ENCODE measurements at regions of chr11 and their contacts with region 1.

Region 1: DNA sequence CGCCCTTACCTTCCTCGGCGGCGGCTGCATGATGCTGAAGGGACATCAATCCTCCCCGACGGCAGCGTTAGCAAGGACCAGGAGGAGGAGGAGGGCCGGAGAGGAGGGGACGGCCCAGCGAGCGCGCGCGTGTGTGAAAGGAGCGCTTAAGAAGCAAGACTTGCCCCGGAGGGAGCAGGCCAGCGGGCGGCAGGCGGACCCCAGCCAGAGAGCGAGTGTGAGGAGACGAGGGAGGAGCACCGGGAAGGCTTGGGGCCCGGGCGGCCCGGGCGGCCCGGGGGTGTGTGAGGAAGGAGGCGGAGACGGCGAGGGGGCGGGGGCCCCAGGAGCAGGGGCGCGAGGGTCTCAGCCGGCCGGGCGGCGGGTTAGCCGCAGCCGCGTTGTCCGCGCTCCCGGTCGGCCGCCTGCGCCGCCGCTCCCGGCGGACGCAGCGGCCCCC is 251 bp downstream of the FCHSD2 start:
- DNase-seq: peak in 4 of 9 donors; percentile 38 to 64 (median 50)
- ATAC-seq: peak; percentile 42
- H3K4me3 ChIP-seq: peak overlapping the region; percentile 87
- H3K4me3 Mint-ChIP-seq: peak overlapping the region; percentile 83 to 97 (median 94)
- H3K27ac ChIP-seq: peak overlapping the region; percentile 99
- H3K27ac Mint-ChIP-seq: peak overlapping the region; percentile 82 to 98 (median 91)
- H3K4me1 ChIP-seq: peaks cover 25 to 26% of the 10 kb centered on the region in 2 donors
- H3K4me1 Mint-ChIP-seq: peaks cover 22 to 58% (median 51%) of the 10 kb centered on the region in 7 donors
- H3K27me3 ChIP-seq: no peaks in the 10 kb centered on the region
- H3K27me3 Mint-ChIP-seq: no peaks in the 10 kb centered on the region

Region 2: GRCh38 chr11:71787098-71787823 is 1354.6 kb before region 1 on chr11:
- CTCF ChIA-PET with region 1: interaction called, 4 read pairs
- POLR2A ChIA-PET with region 1: no interaction called
- intact Hi-C with region 1: loop called in 1 of 2 experiments (anchors 5 kb)
- DNase-seq: peak; percentile 86 to 96 (median 94)
- ATAC-seq: peak; percentile 98
- H3K4me3 ChIP-seq: peak overlapping the region; percentile 86
- H3K4me3 Mint-ChIP-seq: peak overlapping the region; percentile 95 to 100 (median 98)
- H3K27ac ChIP-seq: peak overlapping the region; percentile 93
- H3K27ac Mint-ChIP-seq: peak overlapping the region; percentile 88 to 99 (median 98)
- H3K4me1 ChIP-seq: no peaks in the 10 kb centered on the region
- H3K4me1 Mint-ChIP-seq: peaks cover 0 to 20% (median 12%) of the 10 kb centered on the region in 7 donors
- H3K27me3 ChIP-seq: no peaks in the 10 kb centered on the region
- H3K27me3 Mint-ChIP-seq: peaks cover 0 to 5% (median 0%) of the 10 kb centered on the region in 5 donors

Region 3: DNA sequence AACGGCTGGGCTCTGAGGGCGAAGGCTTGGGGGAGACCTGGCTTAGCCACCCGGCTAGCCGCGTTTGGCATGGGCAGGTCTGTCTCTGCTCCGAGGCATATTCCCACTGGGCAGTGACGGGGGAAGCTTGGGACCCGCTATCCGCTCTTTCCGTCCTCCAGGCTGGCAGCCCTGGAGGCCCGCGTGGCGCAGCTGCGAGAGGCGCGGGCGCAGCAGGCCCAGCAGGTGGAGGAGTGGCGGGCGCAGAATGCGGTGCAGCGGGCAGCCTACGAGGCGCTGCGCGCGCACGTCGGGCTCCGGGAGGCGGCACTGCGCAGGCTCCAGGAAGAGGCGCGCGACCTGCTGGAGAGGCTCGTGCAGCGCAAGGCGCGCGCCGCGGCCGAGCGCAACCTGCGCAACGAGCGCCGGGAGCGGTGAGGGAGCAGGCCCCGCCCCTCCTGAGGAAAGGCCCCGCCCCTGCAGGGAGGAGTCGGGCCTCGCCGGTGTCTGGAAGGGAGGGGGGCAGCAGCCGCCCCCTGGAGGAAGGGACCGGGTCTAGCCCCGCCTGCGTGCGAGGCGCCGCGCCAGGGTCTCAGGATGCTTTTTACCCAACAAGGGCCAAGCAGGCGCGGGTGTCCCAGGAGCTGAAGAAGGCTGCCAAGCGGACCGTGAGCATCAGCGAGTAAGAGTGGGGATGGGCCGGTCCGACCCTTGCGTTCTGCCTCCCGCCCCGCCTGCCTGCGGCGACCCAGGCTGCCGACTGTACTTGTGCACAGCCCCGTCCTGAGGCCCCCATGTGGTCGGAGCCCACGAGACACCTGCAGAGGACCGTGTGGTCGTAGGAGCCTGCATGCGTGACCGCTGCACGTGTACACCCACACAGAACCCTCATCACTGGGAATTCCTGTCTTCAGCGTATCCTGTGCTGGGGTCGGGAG is 319.7 kb before region 1 on chr11:
- CTCF ChIA-PET with region 1: no interaction called
- POLR2A ChIA-PET with region 1: interaction called, 3 read pairs
- intact Hi-C with region 1: loop called in 1 of 2 experiments (anchors 1 kb)
- DNase-seq: peak; percentile 68 to 93 (median 82)
- ATAC-seq: peak; percentile 96
- H3K4me3 ChIP-seq: peak overlapping the region; percentile 33
- H3K4me3 Mint-ChIP-seq: peak overlapping the region in 4 of 10 donors; percentile 34 to 65 (median 48)
- H3K27ac ChIP-seq: peak overlapping the region; percentile 66
- H3K27ac Mint-ChIP-seq: peak overlapping the region in 6 of 9 donors; percentile 23 to 86 (median 68)
- H3K4me1 ChIP-seq: peaks cover 0 to 3% of the 10 kb centered on the region in 2 donors
- H3K4me1 Mint-ChIP-seq: peaks cover 13 to 30% (median 25%) of the 10 kb centered on the region in 7 donors
- H3K27me3 ChIP-seq: no peaks in the 10 kb centered on the region
- H3K27me3 Mint-ChIP-seq: no peaks in the 10 kb centered on the region

Region 4: DNA sequence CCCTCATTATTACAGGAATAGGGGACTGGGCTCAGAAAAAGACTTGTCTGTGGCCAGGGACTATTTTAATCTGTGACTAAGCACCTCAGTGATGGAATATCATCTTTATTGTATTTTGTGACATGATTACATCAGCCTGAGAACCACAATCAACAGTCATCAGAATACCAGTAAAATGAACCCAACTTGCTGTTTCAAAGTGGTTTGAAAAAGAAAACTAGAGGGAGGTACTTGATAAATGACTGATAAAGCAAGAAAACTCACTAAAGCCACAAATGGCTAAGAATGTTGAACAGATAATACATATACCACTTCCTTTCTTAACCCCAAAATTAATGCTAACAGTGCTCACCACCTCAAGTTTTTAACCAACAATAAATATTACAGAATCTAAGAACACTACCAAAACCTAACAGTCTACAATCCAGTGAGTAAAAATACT is 172.0 kb before region 1 on chr11:
- CTCF ChIA-PET with region 1: no interaction called
- POLR2A ChIA-PET with region 1: interaction called, 3 read pairs
- intact Hi-C with region 1: loop called in 1 of 2 experiments (anchors 5 kb)
- DNase-seq: no peak
- ATAC-seq: peak; percentile 77
- H3K4me3 ChIP-seq: no peak overlapping the region
- H3K4me3 Mint-ChIP-seq: peak overlapping the region in 1 of 10 donors; percentile 42
- H3K27ac ChIP-seq: no peak overlapping the region
- H3K27ac Mint-ChIP-seq: peak overlapping the region in 1 of 9 donors; percentile 47
- H3K4me1 ChIP-seq: peaks cover 0 to 15% of the 10 kb centered on the region in 2 donors
- H3K4me1 Mint-ChIP-seq: peaks cover 6 to 51% (median 22%) of the 10 kb centered on the region in 7 donors
- H3K27me3 ChIP-seq: no peaks in the 10 kb centered on the region
- H3K27me3 Mint-ChIP-seq: no peaks in the 10 kb centered on the region

Region 5: GRCh38 chr11:73157053-73158010 is 15.5 kb after region 1 on chr11:
- CTCF ChIA-PET with region 1: interaction called, 12 read pairs
- POLR2A ChIA-PET with region 1: interaction called, 28 read pairs
- intact Hi-C with region 1: loop called (anchors 1 kb)
- DNase-seq: no peak
- ATAC-seq: peak; percentile 45
- H3K4me3 ChIP-seq: no peak overlapping the region
- H3K4me3 Mint-ChIP-seq: peak overlapping the region in 1 of 10 donors; percentile 38
- H3K27ac ChIP-seq: no peak overlapping the region
- H3K27ac Mint-ChIP-seq: peak overlapping the region in 3 of 9 donors; percentile 55 to 75 (median 67)
- H3K4me1 ChIP-seq: peaks cover 40 to 50% of the 10 kb centered on the region in 2 donors
- H3K4me1 Mint-ChIP-seq: peaks cover 43 to 56% (median 48%) of the 10 kb centered on the region in 7 donors
- H3K27me3 ChIP-seq: no peaks in the 10 kb centered on the region
- H3K27me3 Mint-ChIP-seq: no peaks in the 10 kb centered on the region

Region 6: DNA sequence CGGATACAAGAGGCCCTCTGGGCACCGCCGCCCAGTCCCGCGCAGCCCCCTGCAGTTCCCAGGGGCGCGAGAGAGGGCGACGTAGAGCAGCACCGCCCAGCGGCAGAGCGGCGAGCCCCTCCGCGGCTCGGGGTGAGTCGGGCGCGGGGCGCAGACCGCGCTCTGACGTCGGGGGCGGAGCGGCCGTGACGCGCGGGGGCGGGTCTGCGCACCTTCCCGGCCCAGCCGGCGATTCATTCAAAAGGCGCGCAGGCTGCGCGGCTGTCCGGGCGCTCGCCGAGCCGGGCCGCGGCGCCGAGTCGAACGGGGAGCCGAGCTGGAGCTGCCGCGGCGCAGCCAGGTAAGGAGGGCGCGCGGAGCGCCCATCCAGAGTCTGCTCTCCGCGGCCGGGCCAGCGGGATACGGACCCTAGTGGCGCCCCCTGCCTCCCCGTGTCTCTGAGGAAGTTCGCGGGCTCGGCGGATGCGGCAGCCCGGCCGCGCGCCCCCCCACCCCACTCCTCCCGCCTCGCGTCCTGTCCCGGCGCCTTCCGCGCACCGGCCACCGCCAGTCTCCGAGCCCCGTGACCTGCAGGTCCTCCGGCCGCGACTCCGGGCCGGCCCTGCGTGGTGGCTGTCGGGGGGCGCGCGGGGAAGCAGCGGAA is 234.4 kb after region 1 on chr11 and contains the start of gene RELT:
- CTCF ChIA-PET with region 1: no interaction called
- POLR2A ChIA-PET with region 1: no interaction called
- intact Hi-C with region 1: loop called in 1 of 2 experiments (anchors 1 kb)
- DNase-seq: peak; percentile 84 to 99 (median 96)
- ATAC-seq: peak; percentile 93
- H3K4me3 ChIP-seq: peak within 1 kb of the TSS; percentile 84
- H3K4me3 Mint-ChIP-seq: peak within 1 kb of the TSS; percentile 86 to 99 (median 92)
- H3K27ac ChIP-seq: peak within 1 kb of the TSS; percentile 92
- H3K27ac Mint-ChIP-seq: peak within 1 kb of the TSS; percentile 87 to 99 (median 95)
- H3K4me1 ChIP-seq: peaks cover 12 to 22% of the 10 kb centered on the region in 2 donors
- H3K4me1 Mint-ChIP-seq: peaks cover 32 to 49% (median 41%) of the 10 kb centered on the region in 7 donors
- H3K27me3 ChIP-seq: no peaks in the 10 kb centered on the region
- H3K27me3 Mint-ChIP-seq: no peaks in the 10 kb centered on the region
- total RNA-seq, gene RELT: 11.9 to 275 (median 28.4) TPM

Region 7: DNA sequence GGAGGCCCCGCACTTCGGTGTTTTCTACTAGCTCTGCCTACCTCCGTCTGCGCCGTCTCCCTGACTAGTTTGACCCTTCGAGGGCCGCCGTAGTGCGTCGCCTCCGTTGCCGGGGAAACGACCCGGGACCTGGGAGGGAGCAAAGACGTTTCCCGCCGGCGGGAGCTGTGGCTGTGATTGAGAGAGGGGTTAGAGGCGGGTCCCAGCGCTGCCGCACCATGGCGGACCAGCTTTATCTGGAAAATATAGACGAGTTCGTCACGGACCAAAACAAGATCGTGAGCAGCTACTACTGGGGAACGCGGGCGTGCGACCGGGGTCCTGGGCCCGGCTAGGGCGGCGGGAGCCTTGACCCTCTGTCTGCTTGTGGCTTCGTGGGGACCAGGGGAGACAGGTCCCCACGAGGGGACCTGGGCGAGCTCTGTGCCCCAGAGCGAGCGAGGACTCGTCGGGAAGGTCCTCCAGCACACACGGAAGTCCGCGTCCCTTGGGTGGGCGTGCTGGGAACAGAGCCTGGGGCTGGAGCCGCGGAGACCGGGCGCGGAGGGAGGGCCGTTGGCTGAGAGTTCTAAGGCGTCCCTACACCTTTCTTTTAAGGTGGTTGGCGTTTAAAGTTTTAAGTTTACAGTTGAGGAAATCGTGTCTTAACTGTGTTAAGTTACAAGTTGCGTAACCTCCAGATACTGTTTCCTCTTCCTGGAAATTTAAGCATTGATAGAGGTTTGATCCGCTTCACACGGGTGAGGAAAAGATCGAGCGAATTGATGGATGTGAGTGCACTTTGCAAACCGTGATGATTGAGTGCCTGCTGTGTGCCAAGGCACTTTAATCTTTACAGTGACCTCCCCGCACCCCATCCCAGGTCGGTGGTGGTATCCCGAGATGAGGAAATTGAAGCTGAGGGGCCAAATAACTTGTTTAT is 1450.8 kb after region 1 on chr11 and contains the start of gene POLD3:
- CTCF ChIA-PET with region 1: no interaction called
- POLR2A ChIA-PET with region 1: no interaction called
- intact Hi-C with region 1: loop called in 1 of 2 experiments (anchors 5 kb)
- DNase-seq: peak; percentile 83 to 97 (median 94)
- ATAC-seq: peak; percentile 99
- H3K4me3 ChIP-seq: peak within 1 kb of the TSS; percentile 98
- H3K4me3 Mint-ChIP-seq: peak within 1 kb of the TSS; percentile 90 to 100 (median 92)
- H3K27ac ChIP-seq: peak within 1 kb of the TSS; percentile 96
- H3K27ac Mint-ChIP-seq: peak within 1 kb of the TSS; percentile 90 to 99 (median 95)
- H3K4me1 ChIP-seq: peaks cover 9% of the 10 kb centered on the region in 2 donors
- H3K4me1 Mint-ChIP-seq: peaks cover 7 to 33% (median 27%) of the 10 kb centered on the region in 7 donors
- H3K27me3 ChIP-seq: no peaks in the 10 kb centered on the region
- H3K27me3 Mint-ChIP-seq: peaks cover 0 to 5% (median 0%) of the 10 kb centered on the region in 5 donors
- total RNA-seq, gene POLD3: 8.0 to 40.8 (median 14.7) TPM

Region 8: GRCh38 chr11:74992852-74993251 is 1851.0 kb after region 1 on chr11:
- CTCF ChIA-PET with region 1: no interaction called
- POLR2A ChIA-PET with region 1: no interaction called
- intact Hi-C with region 1: no loop called
- DNase-seq: no peak
- ATAC-seq: no peak
- H3K4me3 ChIP-seq: no peak overlapping the region
- H3K4me3 Mint-ChIP-seq: no peak overlapping the region
- H3K27ac ChIP-seq: no peak overlapping the region
- H3K27ac Mint-ChIP-seq: no peak overlapping the region
- H3K4me1 ChIP-seq: peaks cover 8 to 16% of the 10 kb centered on the region in 2 donors
- H3K4me1 Mint-ChIP-seq: peaks cover 16 to 37% (median 31%) of the 10 kb centered on the region in 7 donors
- H3K27me3 ChIP-seq: no peaks in the 10 kb centered on the region
- H3K27me3 Mint-ChIP-seq: no peaks in the 10 kb centered on the region

Measured in naive thymus-derived CD4-positive, alpha-beta T cell (primary cell).